Activated T-helper 1 cell treated with anti-CD3 and anti-CD28 coated beads, Interleukin-12 subunit alpha, Interleukin-12 subunit beta, Interleukin-2, Interleukin-4 antibody, amounts not matched to agents 30 ng/mL and 10 ng/mL and 1 ng/mL, durations not matched to agents 14 hours and 24 hours and 36 hours (primary cell): ENCODE measurements at regions of chr9 and their contacts with region 1.

Region 1: GRCh38 chr9:21709464-21710058 is 92.9 kb upstream of the MTAP start:
- DNase-seq: peak; percentile 31
- H3K4me3 Mint-ChIP-seq: no peak overlapping the region
- H3K27ac Mint-ChIP-seq: no peak overlapping the region
- H3K4me1 Mint-ChIP-seq: peaks cover 5% of the 10 kb centered on the region
- H3K27me3 Mint-ChIP-seq: peaks cover 10% of the 10 kb centered on the region

Region 2: GRCh38 chr9:21434202-21435014 is 275.2 kb before region 1 on chr9:
- intact Hi-C with region 1: loop called (anchors 1 kb)
- DNase-seq: no peak
- H3K4me3 Mint-ChIP-seq: no peak overlapping the region
- H3K27ac Mint-ChIP-seq: no peak overlapping the region
- H3K4me1 Mint-ChIP-seq: no peaks in the 10 kb centered on the region
- H3K27me3 Mint-ChIP-seq: peaks cover 43% of the 10 kb centered on the region

Region 3: GRCh38 chr9:21481470-21482056 is 228.0 kb before region 1 on chr9:
- intact Hi-C with region 1: loop called (anchors 5 kb)
- DNase-seq: no peak
- H3K4me3 Mint-ChIP-seq: no peak overlapping the region
- H3K27ac Mint-ChIP-seq: no peak overlapping the region
- H3K4me1 Mint-ChIP-seq: no peaks in the 10 kb centered on the region
- H3K27me3 Mint-ChIP-seq: peaks cover 17% of the 10 kb centered on the region

Region 4: DNA sequence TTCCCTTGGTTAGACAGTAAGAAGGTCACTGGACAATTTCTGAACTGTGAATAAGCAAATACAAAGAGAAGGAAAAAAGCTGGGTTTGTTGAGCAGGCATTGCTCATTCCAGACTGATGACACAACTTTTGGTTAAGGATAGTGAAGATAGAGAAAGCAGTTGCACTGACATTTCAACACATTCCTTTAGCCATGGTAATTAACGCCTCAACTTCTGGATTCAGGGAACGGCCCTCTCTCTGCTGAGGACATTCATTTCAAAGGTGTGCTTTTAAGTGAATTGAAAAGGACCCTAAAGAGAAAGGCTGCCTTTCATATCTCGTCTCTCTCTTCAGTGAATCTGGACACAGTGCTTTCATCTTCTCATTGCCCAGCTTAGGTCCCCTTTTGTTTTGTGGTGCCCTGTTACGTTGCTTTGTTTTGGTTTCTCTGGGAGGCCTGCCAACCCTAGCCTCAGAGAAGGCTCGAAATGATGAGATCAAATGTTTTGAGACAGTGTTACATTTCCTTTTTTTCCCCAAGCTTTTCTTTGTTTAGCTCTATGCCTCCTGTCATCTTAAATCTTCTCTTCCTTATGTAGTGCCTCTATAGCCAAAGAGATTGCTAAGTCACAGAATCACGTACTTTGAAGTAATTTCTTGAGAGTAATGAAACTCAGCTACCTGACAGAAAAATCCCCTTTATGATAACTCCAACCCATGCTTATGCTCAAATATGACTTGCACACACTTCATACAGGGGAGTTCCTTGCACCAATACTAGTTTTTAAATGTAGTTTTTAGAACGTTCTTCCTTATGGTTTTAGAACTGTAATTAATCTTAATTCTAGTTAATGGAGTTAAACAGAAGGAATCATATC is 133.0 kb before region 1 on chr9:
- intact Hi-C with region 1: loop called (anchors 5 kb)
- DNase-seq: no peak
- H3K4me3 Mint-ChIP-seq: peak overlapping the region; percentile 4
- H3K27ac Mint-ChIP-seq: no peak overlapping the region
- H3K4me1 Mint-ChIP-seq: peaks cover 36% of the 10 kb centered on the region
- H3K27me3 Mint-ChIP-seq: peaks cover 33% of the 10 kb centered on the region